CD8-positive, alpha-beta T cell (primary cell): ENCODE measurements at regions of chr2 and their contacts with region 1.

Region 1: GRCh38 chr2:230781130-230781797 is 68.6 kb downstream of the CAB39 start:
- DNase-seq: peak in 8 of 9 experiments; percentile 7 to 86 (median 56)
- ATAC-seq: peak; percentile 96
- H3K4me3 ChIP-seq: no peak overlapping the region
- H3K4me3 Mint-ChIP-seq: peak overlapping the region; percentile 13
- H3K27ac ChIP-seq: peak overlapping the region in 1 of 2 experiments; percentile 34
- H3K27ac Mint-ChIP-seq: peak overlapping the region; percentile 84
- H3K4me1 ChIP-seq: peaks cover 42% of the 10 kb centered on the region
- H3K4me1 Mint-ChIP-seq: peaks cover 79% of the 10 kb centered on the region
- H3K27me3 ChIP-seq: no peaks in the 10 kb centered on the region
- H3K27me3 Mint-ChIP-seq: no peaks in the 10 kb centered on the region
- CTCF ChIP-seq: no peak

Region 2: GRCh38 chr2:230793572-230794359 is 12.5 kb after region 1 on chr2:
- CTCF ChIA-PET with region 1: interaction called, 33 read pairs
- POLR2A ChIA-PET with region 1: interaction called, 18 read pairs
- intact Hi-C with region 1: loop called in 1 of 2 experiments (anchors 1 kb)
- DNase-seq: peak; percentile 39 to 94 (median 71)
- ATAC-seq: peak; percentile 92
- H3K4me3 ChIP-seq: peak overlapping the region in 1 of 2 experiments; percentile 17
- H3K4me3 Mint-ChIP-seq: peak overlapping the region; percentile 66
- H3K27ac ChIP-seq: peak overlapping the region; percentile 30 to 60
- H3K27ac Mint-ChIP-seq: peak overlapping the region; percentile 89
- H3K4me1 ChIP-seq: peaks cover 43% of the 10 kb centered on the region
- H3K4me1 Mint-ChIP-seq: peaks cover 50% of the 10 kb centered on the region
- H3K27me3 ChIP-seq: no peaks in the 10 kb centered on the region
- H3K27me3 Mint-ChIP-seq: no peaks in the 10 kb centered on the region
- CTCF ChIP-seq: no peak

Region 3: GRCh38 chr2:232511336-232511888 is 1730.1 kb after region 1 on chr2:
- CTCF ChIA-PET with region 1: no interaction called
- POLR2A ChIA-PET with region 1: no interaction called
- intact Hi-C with region 1: no loop called
- DNase-seq: no peak
- ATAC-seq: no peak
- H3K4me3 ChIP-seq: no peak overlapping the region
- H3K4me3 Mint-ChIP-seq: no peak overlapping the region
- H3K27ac ChIP-seq: no peak overlapping the region
- H3K27ac Mint-ChIP-seq: no peak overlapping the region
- H3K4me1 ChIP-seq: no peaks in the 10 kb centered on the region
- H3K4me1 Mint-ChIP-seq: no peaks in the 10 kb centered on the region
- H3K27me3 ChIP-seq: no peaks in the 10 kb centered on the region
- H3K27me3 Mint-ChIP-seq: peaks cover 18% of the 10 kb centered on the region
- CTCF ChIP-seq: no peak